Activated B cell treated with CpG ODN at 0.5 μM for 24 hours (primary cell): ENCODE measurements at regions of chr20 and their contacts with region 1.

Region 1: DNA sequence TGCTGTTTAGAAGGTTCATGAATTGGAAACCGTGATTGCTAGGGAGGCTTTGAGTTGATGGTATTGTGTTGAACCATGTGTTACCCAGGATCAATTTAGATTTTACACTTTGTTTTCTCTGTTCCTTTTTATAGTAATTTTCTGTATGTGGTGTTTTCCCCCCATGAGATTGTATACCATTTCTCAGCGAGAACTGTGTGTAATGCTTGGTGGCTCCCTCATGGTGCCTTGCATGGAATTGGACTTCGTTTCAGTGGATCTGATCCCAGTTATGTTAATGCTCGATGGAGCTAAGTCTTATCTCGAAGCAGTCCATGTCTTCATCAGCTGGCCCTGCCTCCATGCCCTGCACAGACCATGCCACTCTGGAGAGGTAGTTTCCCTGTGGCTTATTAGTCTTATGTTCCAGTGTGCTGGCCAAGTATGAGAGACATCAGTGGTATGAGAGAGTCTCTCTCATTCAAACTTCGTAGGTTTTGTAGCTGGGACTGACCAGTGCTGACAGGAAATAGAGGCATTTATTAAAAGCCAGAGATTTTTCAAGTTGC is 18.7 kb downstream of the PTPN1 start:
- DNase-seq: no peak
- ATAC-seq: peak; percentile 45
- H3K4me3 Mint-ChIP-seq: peak overlapping the region; percentile 63
- H3K27ac Mint-ChIP-seq: no peak overlapping the region
- H3K4me1 Mint-ChIP-seq: peaks cover 36% of the 10 kb centered on the region
- H3K27me3 Mint-ChIP-seq: no peaks in the 10 kb centered on the region
- CTCF ChIP-seq: no peak

Region 2: GRCh38 chr20:50540620-50541605 is 12.0 kb after region 1 on chr20:
- CTCF ChIA-PET with region 1: interaction called, 3 read pairs
- POLR2A ChIA-PET with region 1: interaction called, 1,679 read pairs
- intact Hi-C with region 1: loop called (anchors 1 kb)
- DNase-seq: no peak
- ATAC-seq: no peak
- H3K4me3 Mint-ChIP-seq: peak overlapping the region; percentile 73
- H3K27ac Mint-ChIP-seq: peak overlapping the region; percentile 85
- H3K4me1 Mint-ChIP-seq: peaks cover 89% of the 10 kb centered on the region
- H3K27me3 Mint-ChIP-seq: no peaks in the 10 kb centered on the region
- CTCF ChIP-seq: no peak